SK-N-SH (cell line): ENCODE measurements at regions of chr2 and their contacts with region 1.

Region 1: GRCh38 chr2:207746131-207746530 is 23.6 kb downstream of the FZD5 start:
- DNase-seq: peak; percentile 64
- H3K4me3 ChIP-seq: no peak overlapping the region
- H3K27ac ChIP-seq: peak overlapping the region in 1 of 2 experiments; percentile 50; a peak in 2 of 4 replicates
- H3K4me1 ChIP-seq: peaks cover 0 to 20% of the 10 kb centered on the region in 2 experiments; a peak in 2 of 4 replicates
- H3K27me3 ChIP-seq: no peaks in the 10 kb centered on the region
- CTCF ChIP-seq: peak; percentile 98
- EP300 ChIP-seq: no peak
- RAD21 ChIP-seq: peak; percentile 99

Region 2: GRCh38 chr2:207734264-207734635 is 11.9 kb before region 1 on chr2:
- CTCF ChIA-PET with region 1: interaction called, 33 read pairs
- POLR2A ChIA-PET with region 1: no interaction called
- DNase-seq: peak; percentile 16
- H3K4me3 ChIP-seq: no peak overlapping the region
- H3K27ac ChIP-seq: no peak overlapping the region
- H3K4me1 ChIP-seq: no peaks in the 10 kb centered on the region
- H3K27me3 ChIP-seq: no peaks in the 10 kb centered on the region
- CTCF ChIP-seq: peak; percentile 64
- EP300 ChIP-seq: no peak
- RAD21 ChIP-seq: peak; percentile 72

Region 3: DNA sequence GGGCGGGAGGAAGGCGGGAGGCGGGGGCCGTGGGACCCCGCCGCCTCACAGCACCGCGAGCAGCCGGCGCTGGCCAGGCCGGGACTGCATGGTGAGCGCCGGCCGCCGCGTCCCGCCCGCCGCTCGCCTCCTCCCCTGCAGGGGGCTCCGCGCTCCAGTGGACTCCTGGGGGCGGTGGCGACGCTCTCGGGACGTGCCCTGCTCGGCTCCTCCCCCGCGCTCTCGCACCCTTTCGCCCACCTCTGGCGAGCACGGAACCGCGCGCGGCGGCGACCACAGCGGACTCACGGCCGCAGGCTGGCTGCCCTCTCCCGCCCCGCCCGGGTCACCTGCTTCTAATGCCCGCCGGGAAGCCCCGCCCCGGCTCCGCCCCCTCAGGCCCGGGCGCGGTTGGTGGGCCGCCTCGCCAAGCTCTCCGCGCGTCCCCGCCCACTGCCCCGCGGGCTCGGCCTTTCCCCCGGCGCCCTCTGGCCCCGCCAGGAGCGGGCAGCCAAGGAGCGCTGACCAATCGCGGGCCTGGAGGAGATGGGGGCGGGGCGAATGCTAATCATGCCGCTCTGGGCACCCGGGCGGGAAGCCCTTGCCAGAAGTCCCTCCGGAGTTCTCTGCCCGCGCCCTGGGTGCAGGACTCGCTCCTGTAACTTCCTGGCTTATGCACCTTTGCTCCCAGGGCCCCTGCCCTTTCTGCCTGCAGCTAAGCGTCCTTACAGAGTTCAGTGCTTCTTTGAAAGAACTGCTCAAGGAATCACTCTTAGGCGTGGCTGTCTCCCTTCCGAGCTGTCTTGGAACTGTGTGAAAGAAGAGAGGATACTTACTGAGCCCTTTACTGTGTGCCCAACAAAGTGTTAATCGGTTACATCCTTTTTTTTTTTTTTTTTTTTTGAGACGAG is 23.7 kb after region 1 on chr2 and contains the start of gene FZD5:
- CTCF ChIA-PET with region 1: interaction called, 17 read pairs
- POLR2A ChIA-PET with region 1: no interaction called
- DNase-seq: peak; percentile 98
- H3K4me3 ChIP-seq: peak within 1 kb of the TSS; percentile 79 to 89
- H3K27ac ChIP-seq: peak within 1 kb of the TSS; percentile 11 to 33; a peak in 2 of 4 replicates
- H3K4me1 ChIP-seq: peaks cover 0 to 18% of the 10 kb centered on the region in 2 experiments; a peak in 1 of 4 replicates
- H3K27me3 ChIP-seq: no peaks in the 10 kb centered on the region
- CTCF ChIP-seq: peak; percentile 49
- EP300 ChIP-seq: no peak
- RAD21 ChIP-seq: peak; percentile 42
- polyA plus RNA-seq, gene FZD5: 0.52 and 0.72 TPM in 2 replicates

Region 4: DNA sequence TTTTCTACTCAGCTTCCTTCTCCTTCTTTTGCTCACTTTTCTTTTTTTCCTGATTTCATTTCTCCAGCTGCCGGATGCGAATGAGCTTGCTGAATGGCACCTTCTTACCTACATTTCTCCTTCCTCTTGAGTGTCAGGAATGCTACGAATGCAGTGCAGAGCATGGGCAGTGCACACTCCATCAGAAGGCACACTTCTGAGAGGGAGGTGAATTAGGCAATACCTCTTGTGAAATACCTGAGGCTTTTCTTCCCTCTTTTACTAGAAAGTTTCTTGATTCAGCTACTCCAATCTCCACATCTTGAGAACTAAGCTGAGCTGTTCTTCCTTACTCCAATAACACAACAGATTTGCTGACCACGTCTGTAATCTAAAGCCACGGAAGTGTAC is 228.1 kb after region 1 on chr2:
- CTCF ChIA-PET with region 1: interaction called, 102 read pairs
- POLR2A ChIA-PET with region 1: no interaction called
- DNase-seq: no peak
- H3K4me3 ChIP-seq: no peak overlapping the region
- H3K27ac ChIP-seq: no peak overlapping the region
- H3K4me1 ChIP-seq: peaks cover 0 to 4% of the 10 kb centered on the region in 2 experiments; a peak in 2 of 4 replicates
- H3K27me3 ChIP-seq: no peaks in the 10 kb centered on the region
- CTCF ChIP-seq: no peak
- EP300 ChIP-seq: no peak
- RAD21 ChIP-seq: no peak

Region 5: GRCh38 chr2:208040199-208041171 is 294.4 kb after region 1 on chr2:
- CTCF ChIA-PET with region 1: interaction called, 128 read pairs
- POLR2A ChIA-PET with region 1: no interaction called
- DNase-seq: peak; percentile 58
- H3K4me3 ChIP-seq: no peak overlapping the region
- H3K27ac ChIP-seq: no peak overlapping the region
- H3K4me1 ChIP-seq: no peaks in the 10 kb centered on the region
- H3K27me3 ChIP-seq: no peaks in the 10 kb centered on the region
- CTCF ChIP-seq: peak; percentile 82
- EP300 ChIP-seq: no peak
- RAD21 ChIP-seq: peak; percentile 68

Region 6: GRCh38 chr2:208072250-208072892 is 326.2 kb after region 1 on chr2:
- CTCF ChIA-PET with region 1: interaction called, 162 read pairs
- POLR2A ChIA-PET with region 1: no interaction called
- DNase-seq: peak; percentile 71
- H3K4me3 ChIP-seq: no peak overlapping the region; a peak in 1 of 4 replicates
- H3K27ac ChIP-seq: no peak overlapping the region
- H3K4me1 ChIP-seq: no peaks in the 10 kb centered on the region
- H3K27me3 ChIP-seq: no peaks in the 10 kb centered on the region
- CTCF ChIP-seq: peak; percentile 84
- EP300 ChIP-seq: no peak
- RAD21 ChIP-seq: peak; percentile 96

Region 7: GRCh38 chr2:208334230-208334629 is 588.1 kb after region 1 on chr2:
- CTCF ChIA-PET with region 1: no interaction called
- POLR2A ChIA-PET with region 1: no interaction called
- DNase-seq: no peak
- H3K4me3 ChIP-seq: no peak overlapping the region
- H3K27ac ChIP-seq: no peak overlapping the region; a peak in 1 of 4 replicates
- H3K4me1 ChIP-seq: no peaks in the 10 kb centered on the region
- H3K27me3 ChIP-seq: no peaks in the 10 kb centered on the region
- CTCF ChIP-seq: no peak
- EP300 ChIP-seq: no peak
- RAD21 ChIP-seq: no peak